SK-N-SH (cell line): ENCODE measurements at regions of chr4 and their contacts with region 1.

Region 1: DNA sequence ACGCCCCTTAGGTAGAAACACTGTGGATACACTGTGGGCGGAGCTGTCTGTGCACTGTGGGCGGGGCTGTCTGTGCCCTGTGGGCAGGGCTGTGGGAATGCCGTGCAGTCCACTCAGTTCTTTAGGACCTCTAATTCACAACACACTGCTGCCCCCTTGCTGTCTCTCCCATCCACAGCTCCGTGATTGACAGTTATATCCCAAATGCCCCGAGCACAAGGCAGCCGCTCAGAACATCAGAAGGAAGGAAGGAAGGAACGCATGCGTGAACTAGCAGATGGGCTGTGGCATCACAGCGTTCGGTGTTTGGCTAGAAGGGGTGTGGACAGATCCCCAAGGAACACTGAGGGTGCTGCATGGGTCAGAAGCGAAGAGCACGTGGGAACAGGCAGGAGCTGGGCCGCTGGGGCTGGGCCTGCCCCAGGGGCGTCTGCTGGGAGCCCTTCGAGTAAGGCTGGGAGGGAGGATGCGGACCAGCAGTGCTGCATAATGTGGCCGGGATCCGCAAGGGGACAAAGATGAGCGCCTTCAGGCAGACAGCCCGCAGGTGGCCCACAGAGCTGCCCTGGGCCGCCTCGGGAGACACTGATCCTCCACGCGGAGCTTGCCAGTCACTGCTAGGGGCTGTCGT is 29.8 kb downstream of the ACOX3 start:
- DNase-seq: peak; percentile 88
- H3K4me3 ChIP-seq: no peak overlapping the region; a peak in 1 of 4 replicates
- H3K27ac ChIP-seq: no peak overlapping the region; a peak in 1 of 4 replicates
- H3K4me1 ChIP-seq: peaks cover 0 to 4% of the 10 kb centered on the region in 2 experiments; a peak in 1 of 4 replicates
- H3K27me3 ChIP-seq: no peaks in the 10 kb centered on the region
- CTCF ChIP-seq: peak; percentile 47
- EP300 ChIP-seq: no peak
- RAD21 ChIP-seq: peak; percentile 78

Region 2: DNA sequence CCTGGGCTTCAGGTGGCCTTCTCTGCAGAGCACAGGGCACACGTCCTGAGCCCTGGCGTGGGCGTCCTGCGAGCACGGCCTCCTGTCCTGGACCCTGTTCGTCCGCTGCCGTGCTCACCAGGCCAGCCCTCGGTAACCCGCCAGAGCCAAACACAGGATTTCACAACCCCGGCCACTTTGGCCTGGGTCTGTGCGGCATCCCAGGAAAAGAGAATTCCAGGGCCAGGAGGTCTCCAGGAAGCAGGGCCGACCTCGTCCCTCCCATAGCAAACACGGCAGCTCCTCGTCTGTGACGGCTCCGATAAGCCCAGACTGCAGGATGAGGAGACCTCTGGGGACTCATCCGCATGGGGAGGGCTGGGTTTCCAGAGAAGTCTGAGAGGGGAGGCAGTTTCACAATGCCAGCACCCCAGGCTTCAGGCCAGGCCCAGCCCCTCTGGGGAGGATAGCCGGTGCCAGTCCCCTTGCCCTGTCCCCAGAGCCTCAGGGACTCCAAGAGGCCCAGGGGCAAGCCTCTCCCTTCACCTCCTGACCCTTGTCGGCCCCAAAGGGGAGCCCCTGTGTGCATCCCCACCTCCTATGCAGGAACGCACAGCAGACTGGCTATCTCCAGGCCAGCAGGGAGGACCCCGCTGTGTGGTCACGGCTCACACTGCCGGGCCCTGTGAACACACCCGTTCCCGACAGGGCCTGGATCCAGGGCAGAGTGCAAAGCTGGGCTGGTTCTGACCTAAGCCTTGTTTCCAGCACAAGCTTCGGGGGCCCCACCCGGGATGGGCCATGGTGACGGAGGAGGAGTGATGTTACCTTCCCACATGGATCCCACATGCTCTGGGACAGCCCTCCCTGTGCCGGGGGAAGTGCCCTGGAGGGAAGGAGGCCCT is 163.5 kb before region 1 on chr4:
- CTCF ChIA-PET with region 1: interaction called, 115 read pairs
- POLR2A ChIA-PET with region 1: no interaction called
- DNase-seq: no peak
- H3K4me3 ChIP-seq: no peak overlapping the region
- H3K27ac ChIP-seq: no peak overlapping the region
- H3K4me1 ChIP-seq: peaks cover 4 to 7% of the 10 kb centered on the region in 2 experiments; a peak in 1 of 4 replicates
- H3K27me3 ChIP-seq: no peaks in the 10 kb centered on the region
- CTCF ChIP-seq: no peak
- EP300 ChIP-seq: no peak
- RAD21 ChIP-seq: no peak

Region 3: GRCh38 chr4:8274765-8275547 is 135.8 kb before region 1 on chr4:
- CTCF ChIA-PET with region 1: interaction called, 16 read pairs
- POLR2A ChIA-PET with region 1: no interaction called
- DNase-seq: peak; percentile 95
- H3K4me3 ChIP-seq: no peak overlapping the region
- H3K27ac ChIP-seq: peak overlapping the region; percentile 55 to 93; a peak in 3 of 4 replicates
- H3K4me1 ChIP-seq: peaks cover 38 to 39% of the 10 kb centered on the region in 2 experiments
- H3K27me3 ChIP-seq: no peaks in the 10 kb centered on the region
- CTCF ChIP-seq: peak; percentile 60
- EP300 ChIP-seq: peak in 1 of 2 experiments; percentile 43; a peak in 1 of 4 replicates
- RAD21 ChIP-seq: peak; percentile 85

Region 4: DNA sequence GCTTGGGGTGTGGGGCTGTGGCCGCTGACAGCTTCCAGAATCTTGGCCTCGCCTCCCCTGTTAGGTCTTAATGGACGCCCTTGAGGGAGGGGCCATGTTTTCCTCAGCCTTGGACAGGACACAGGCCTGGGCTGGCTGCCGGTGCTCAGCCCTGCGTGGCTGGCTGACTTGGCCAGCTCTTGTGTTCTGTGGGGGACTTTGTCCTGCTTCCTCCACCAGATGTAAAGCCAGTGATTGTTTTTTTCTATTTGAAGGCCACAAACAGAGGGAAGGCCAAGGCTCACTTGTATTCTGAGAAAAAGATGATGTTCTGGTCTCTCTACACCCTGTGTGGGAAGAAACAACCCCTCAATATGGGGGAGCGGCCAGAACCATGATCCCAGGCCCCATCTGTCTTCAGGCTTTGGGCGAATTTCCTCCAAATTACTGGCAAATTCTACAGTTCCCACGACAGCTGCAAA is 69.9 kb before region 1 on chr4:
- CTCF ChIA-PET with region 1: no interaction called
- POLR2A ChIA-PET with region 1: no interaction called
- DNase-seq: no peak
- H3K4me3 ChIP-seq: no peak overlapping the region
- H3K27ac ChIP-seq: no peak overlapping the region
- H3K4me1 ChIP-seq: peaks cover 0 to 5% of the 10 kb centered on the region in 2 experiments; a peak in 1 of 4 replicates
- H3K27me3 ChIP-seq: no peaks in the 10 kb centered on the region
- CTCF ChIP-seq: no peak
- EP300 ChIP-seq: no peak
- RAD21 ChIP-seq: no peak

Region 5: DNA sequence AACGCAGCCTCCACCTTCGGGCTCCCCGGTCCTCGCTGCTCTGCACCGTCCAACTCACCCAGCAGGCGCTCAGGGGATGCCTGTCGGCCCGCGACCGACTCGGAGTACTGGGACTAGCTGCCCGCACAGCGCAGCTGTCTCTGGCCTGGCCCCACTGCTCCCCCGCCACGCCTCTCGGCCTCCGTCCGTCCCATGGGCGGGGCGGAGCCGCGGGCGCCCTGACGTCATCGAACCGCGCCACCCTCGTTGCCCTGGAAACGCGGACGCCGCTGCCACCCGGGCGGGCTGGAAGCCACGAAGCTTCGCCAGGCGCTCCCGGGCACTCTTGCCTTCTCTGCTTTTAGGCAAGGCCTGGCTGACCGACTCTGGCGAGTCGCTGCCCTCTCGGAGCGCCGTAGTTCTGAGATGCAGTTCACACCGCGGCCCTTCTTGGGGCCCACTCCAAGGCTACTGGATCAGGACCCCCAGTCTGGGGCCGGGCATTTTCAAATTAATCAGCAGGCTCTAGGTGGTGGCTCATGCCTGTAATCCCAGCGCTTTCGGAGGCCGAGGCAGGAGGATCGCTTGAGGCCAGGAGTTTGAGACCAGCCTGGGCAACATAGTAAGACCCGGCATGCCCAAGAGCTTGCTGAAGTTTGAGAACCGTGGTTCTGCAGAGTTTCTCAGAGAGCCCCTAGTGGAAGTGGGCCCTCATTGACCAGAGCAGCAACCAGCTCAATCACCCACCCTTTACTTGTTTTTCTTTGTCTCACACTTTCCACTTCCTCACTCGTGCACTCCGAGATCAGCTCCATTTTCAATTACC is 17.7 kb after region 1 on chr4:
- CTCF ChIA-PET with region 1: interaction called, 10 read pairs
- POLR2A ChIA-PET with region 1: interaction called, 3 read pairs
- DNase-seq: peak; percentile 99
- H3K4me3 ChIP-seq: peak overlapping the region; percentile 80 to 90
- H3K27ac ChIP-seq: peak overlapping the region; percentile 47 to 69
- H3K4me1 ChIP-seq: peaks cover 0 to 16% of the 10 kb centered on the region in 2 experiments; a peak in 1 of 4 replicates
- H3K27me3 ChIP-seq: no peaks in the 10 kb centered on the region
- CTCF ChIP-seq: peak; percentile 61
- EP300 ChIP-seq: no peak
- RAD21 ChIP-seq: no peak

Region 6: GRCh38 chr4:8534129-8534528 is 123.4 kb after region 1 on chr4:
- CTCF ChIA-PET with region 1: no interaction called
- POLR2A ChIA-PET with region 1: no interaction called
- DNase-seq: no peak
- H3K4me3 ChIP-seq: no peak overlapping the region
- H3K27ac ChIP-seq: no peak overlapping the region
- H3K4me1 ChIP-seq: peaks cover 0 to 4% of the 10 kb centered on the region in 2 experiments; a peak in 2 of 4 replicates
- H3K27me3 ChIP-seq: no peaks in the 10 kb centered on the region
- CTCF ChIP-seq: no peak
- EP300 ChIP-seq: no peak
- RAD21 ChIP-seq: no peak

Region 7: DNA sequence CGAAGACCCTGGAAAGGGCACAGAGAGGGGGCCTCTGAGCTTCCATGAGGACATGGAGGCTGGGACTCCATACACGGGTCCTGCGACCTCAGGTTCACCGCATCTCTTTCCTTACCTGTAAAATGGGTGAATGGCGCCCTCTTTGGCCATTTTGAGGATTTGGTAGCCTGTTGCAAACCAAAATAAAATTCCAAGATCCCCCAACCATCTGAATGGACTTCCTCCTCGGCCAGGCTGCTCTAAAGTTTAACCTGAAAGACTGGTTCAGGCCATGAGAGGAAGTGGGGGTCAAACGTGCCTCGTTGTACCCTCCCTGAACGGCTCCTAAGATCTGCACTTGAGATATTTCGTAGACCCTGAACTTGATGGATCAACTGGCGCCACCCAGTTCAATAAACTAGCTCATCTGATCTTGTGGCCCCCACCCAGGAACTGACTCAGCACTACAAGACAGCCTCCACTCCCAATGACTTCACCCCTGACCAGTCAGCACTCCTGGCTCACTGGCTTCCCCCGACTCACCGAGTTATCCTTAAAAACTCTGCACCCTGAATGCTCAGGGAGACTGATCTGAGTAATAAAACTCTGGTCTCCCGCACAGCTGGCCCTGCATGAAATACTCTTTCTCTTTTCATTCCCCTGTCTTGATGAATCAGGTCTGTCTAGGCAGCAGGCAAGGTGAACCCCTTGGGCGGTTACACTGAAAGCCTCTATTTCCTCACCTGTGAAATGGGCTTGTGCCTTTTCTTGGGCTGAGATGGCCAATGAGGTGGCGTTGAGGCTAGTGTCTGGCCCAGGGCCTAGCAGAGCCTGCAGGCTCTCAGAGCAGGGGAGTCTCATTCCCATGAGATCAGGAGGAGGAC is 136.6 kb after region 1 on chr4:
- CTCF ChIA-PET with region 1: no interaction called
- POLR2A ChIA-PET with region 1: no interaction called
- DNase-seq: peak; percentile 36
- H3K4me3 ChIP-seq: 0 out of 4 replicates have a peak overlapping the region, but pooled peaks of 1 of the 2 experiments have one; percentile 29
- H3K27ac ChIP-seq: no peak overlapping the region
- H3K4me1 ChIP-seq: no peaks in the 10 kb centered on the region
- H3K27me3 ChIP-seq: no peaks in the 10 kb centered on the region
- CTCF ChIP-seq: peak; percentile 55
- EP300 ChIP-seq: no peak
- RAD21 ChIP-seq: peak; percentile 43